ENCODE measurements at regions of chr12 and their contacts with region 1.

Region 1: GRCh38 chr12:12376646-12377448 is 20.0 kb downstream of the BORCS5 start:
- DNase-seq: no peak
- ATAC-seq: peak; percentile 79
- H3K4me3 Mint-ChIP-seq: no peak overlapping the region
- H3K27ac Mint-ChIP-seq: no peak overlapping the region
- H3K4me1 Mint-ChIP-seq: peaks cover 9% of the 10 kb centered on the region
- H3K27me3 Mint-ChIP-seq: no peaks in the 10 kb centered on the region
- CTCF ChIP-seq: peak; percentile 45

Region 2: GRCh38 chr12:12654691-12655460 is 278.0 kb after region 1 on chr12:
- CTCF ChIA-PET with region 1: interaction called, 10 read pairs
- POLR2A ChIA-PET with region 1: no interaction called
- DNase-seq: no peak
- ATAC-seq: no peak
- H3K4me3 Mint-ChIP-seq: no peak overlapping the region
- H3K27ac Mint-ChIP-seq: no peak overlapping the region
- H3K4me1 Mint-ChIP-seq: peaks cover 28% of the 10 kb centered on the region
- H3K27me3 Mint-ChIP-seq: 0 out of 2 replicates have a peak, but pooled peaks cover 4% of the 10 kb centered on the region
- CTCF ChIP-seq: no peak

Measured in WTC11 (cell line).